ENCODE measurements at regions of chr2 and their contacts with region 1.

Region 1: GRCh38 chr2:69643602-69644505 is at the start of gene AAK1:
- DNase-seq: peak; percentile 90
- ATAC-seq: peak; percentile 66
- H3K4me3 Mint-ChIP-seq: peak within 1 kb of the TSS; percentile 92
- H3K27ac Mint-ChIP-seq: peak within 1 kb of the TSS; percentile 98
- H3K4me1 Mint-ChIP-seq: peaks cover 56% of the 10 kb centered on the region
- H3K27me3 Mint-ChIP-seq: no peaks in the 10 kb centered on the region
- total RNA-seq, gene AAK1: 105 to 107 TPM

Region 2: GRCh38 chr2:69356471-69356870 is 287.4 kb before region 1 on chr2:
- CTCF ChIA-PET with region 1: no interaction called
- POLR2A ChIA-PET with region 1: no interaction called
- DNase-seq: no peak
- ATAC-seq: no peak
- H3K4me3 Mint-ChIP-seq: no peak overlapping the region
- H3K27ac Mint-ChIP-seq: no peak overlapping the region
- H3K4me1 Mint-ChIP-seq: peaks cover 4% of the 10 kb centered on the region
- H3K27me3 Mint-ChIP-seq: no peaks in the 10 kb centered on the region

Region 3: GRCh38 chr2:69436938-69437750 is 206.7 kb before region 1 on chr2 and contains the start of gene NFU1:
- CTCF ChIA-PET with region 1: interaction called, 15 read pairs
- POLR2A ChIA-PET with region 1: interaction called, 10 read pairs
- DNase-seq: peak; percentile 91
- ATAC-seq: peak; percentile 92
- H3K4me3 Mint-ChIP-seq: peak within 1 kb of the TSS; percentile 96
- H3K27ac Mint-ChIP-seq: peak within 1 kb of the TSS; percentile 97
- H3K4me1 Mint-ChIP-seq: peaks cover 36% of the 10 kb centered on the region
- H3K27me3 Mint-ChIP-seq: no peaks in the 10 kb centered on the region
- total RNA-seq, gene NFU1: 27.8 to 30.4 TPM

Region 4: DNA sequence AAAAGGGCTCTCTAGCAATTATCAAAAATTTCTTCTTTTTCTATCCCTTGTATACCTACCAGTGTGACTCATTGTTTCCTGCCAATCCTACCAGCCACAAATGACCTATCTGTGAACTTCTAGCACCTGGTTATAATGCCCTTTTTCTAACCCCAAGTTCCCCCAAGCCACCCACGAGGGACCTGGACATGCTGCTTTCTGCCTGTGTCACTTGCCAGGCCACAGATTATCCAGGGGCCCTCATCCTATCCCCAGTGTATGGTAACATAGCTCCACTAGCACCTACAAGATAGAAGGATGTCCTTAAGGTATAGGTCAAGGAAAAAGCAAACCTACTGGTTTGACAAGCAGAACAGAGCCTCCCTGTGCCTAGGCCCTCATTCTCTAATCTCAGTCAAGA is 27.1 kb before region 1 on chr2:
- CTCF ChIA-PET with region 1: interaction called, 26 read pairs
- POLR2A ChIA-PET with region 1: interaction called, 3 read pairs
- DNase-seq: peak; percentile 63
- ATAC-seq: peak; percentile 53
- H3K4me3 Mint-ChIP-seq: no peak overlapping the region
- H3K27ac Mint-ChIP-seq: peak overlapping the region; percentile 5
- H3K4me1 Mint-ChIP-seq: peaks cover 32% of the 10 kb centered on the region
- H3K27me3 Mint-ChIP-seq: no peaks in the 10 kb centered on the region

Region 5: DNA sequence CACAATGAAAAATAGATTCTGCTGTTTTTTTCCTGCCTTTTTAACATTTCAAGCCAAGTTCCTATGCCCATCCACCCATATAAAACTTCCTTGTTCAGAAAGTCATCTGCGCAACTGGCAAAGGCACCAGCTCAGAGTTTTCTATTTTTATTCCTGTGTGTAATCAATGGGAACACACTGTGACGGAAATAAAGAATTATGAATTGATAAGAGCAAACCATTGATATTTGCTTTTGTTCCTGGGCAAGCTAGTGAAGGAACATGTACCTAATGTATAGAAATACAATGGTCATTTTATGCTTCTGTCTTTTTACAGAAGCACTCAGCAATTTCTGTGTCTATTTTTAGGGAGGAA is 30.4 kb after region 1 on chr2:
- CTCF ChIA-PET with region 1: interaction called, 17 read pairs
- POLR2A ChIA-PET with region 1: interaction called, 8 read pairs
- DNase-seq: no peak
- ATAC-seq: no peak
- H3K4me3 Mint-ChIP-seq: no peak overlapping the region
- H3K27ac Mint-ChIP-seq: no peak overlapping the region
- H3K4me1 Mint-ChIP-seq: peaks cover 35% of the 10 kb centered on the region
- H3K27me3 Mint-ChIP-seq: no peaks in the 10 kb centered on the region

Region 6: GRCh38 chr2:69694894-69695849 is 51.3 kb after region 1 on chr2:
- CTCF ChIA-PET with region 1: interaction called, 12 read pairs
- POLR2A ChIA-PET with region 1: interaction called, 8 read pairs
- DNase-seq: no peak
- ATAC-seq: no peak
- H3K4me3 Mint-ChIP-seq: no peak overlapping the region
- H3K27ac Mint-ChIP-seq: no peak overlapping the region
- H3K4me1 Mint-ChIP-seq: peaks cover 71% of the 10 kb centered on the region
- H3K27me3 Mint-ChIP-seq: no peaks in the 10 kb centered on the region